OCI-LY7 (cell line): ENCODE measurements at regions of chr1 and their contacts with region 1.

Region 1: DNA sequence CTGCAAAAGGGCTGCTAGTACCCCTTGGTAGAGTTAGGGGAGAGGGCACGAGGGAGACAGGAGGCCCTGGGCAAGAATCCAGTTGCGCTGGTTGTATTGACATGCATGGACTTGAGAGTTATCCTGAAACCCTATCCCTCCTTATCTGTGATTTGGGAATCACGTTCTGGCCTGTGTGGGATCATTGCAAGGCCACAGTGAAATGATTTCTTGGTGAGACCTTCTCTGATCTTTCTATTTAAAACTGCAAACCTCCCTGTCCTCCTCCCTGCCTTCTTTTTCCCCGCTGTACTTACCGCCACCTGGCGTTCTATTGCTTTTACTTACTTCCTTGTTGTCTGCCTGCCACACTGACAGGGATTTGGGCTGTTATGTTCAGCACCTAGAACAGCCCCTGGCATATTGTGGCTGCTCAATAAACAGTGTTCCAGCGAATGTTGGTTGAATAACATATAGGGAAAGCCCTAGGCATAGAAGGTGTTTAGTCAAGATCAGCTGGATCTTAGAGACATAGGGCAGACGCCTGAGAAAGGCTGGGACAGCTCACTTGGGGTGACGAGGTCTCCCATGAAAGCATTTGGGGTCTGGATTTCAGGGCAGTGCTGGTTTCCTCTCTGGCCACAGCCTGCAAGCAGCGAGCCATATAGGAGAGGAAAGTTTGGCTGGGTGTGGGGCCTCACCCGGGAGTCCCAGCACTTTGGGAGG is 25.6 kb downstream of the ALPL start:
- DNase-seq: peak; percentile 68
- H3K4me3 ChIP-seq: no peak overlapping the region
- H3K27ac ChIP-seq: no peak overlapping the region
- H3K4me1 ChIP-seq: no peaks in the 10 kb centered on the region
- CTCF ChIP-seq: peak; percentile 85

Region 2: DNA sequence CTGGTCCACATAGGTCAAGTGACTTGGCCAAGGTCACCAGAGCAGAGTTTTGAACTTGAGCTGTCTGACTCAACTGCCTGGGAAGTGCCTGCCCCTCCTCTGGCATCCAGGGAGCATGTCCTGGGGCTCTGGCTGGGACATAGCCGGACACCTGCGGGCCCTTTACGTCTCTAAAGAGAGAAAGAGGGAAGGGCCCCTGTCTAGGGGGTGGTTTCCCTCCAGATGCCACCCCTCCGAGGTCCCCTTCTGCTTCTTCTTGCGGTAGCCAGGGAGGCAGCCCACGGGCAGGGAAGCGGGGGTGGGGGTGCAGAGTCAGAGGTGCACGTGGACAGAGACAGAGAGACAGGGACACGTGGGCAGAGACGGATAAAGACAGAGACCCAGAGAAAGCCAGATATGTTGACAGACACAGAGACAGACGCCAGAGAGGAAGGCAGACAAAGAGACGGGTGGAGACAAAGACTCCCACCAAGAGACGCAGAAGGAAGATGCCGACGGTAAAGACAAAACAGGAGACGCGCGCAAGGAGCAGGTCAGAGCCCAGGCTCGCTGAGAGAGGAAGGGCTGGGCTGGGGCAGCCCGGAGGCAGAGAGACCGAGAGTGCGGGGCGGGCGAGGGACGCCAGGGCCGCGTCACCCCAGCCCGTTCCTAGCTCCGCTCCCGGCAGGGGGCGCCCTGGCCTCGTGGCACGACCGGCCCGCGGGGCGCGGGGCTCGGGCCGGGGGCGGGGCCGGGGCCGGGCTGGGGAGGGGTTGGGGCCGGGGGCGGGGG is 26.1 kb before region 1 on chr1:
- CTCF ChIA-PET with region 1: no interaction called
- POLR2A ChIA-PET with region 1: no interaction called
- intact Hi-C with region 1: loop called (anchors 1 kb)
- DNase-seq: peak; percentile 57
- H3K4me3 ChIP-seq: no peak overlapping the region
- H3K27ac ChIP-seq: no peak overlapping the region
- H3K4me1 ChIP-seq: peaks cover 8% of the 10 kb centered on the region
- CTCF ChIP-seq: peak; percentile 50